ENCODE measurements at regions of chr12 and their contacts with region 1.

Region 1: DNA sequence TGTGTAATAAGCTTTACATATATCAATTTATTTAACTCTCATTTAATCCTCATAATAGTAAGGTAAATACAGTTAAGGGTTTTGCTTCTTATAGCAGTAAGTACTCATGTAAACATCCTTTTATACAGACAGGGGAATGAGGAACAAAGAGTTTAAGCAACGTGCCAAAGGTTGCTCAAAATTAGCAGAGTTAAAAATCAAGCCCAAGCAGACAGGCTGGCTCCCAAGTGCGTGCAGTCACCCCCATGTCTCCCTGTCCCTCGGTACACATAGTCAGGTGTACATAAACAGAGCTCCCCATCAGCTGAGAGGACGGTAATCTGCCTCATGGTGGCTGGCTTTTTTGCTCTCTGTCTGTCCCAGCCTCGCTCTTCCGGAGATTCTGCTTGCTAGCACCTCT is 126.4 kb downstream of the DERA start:
- DNase-seq: no peak
- H3K4me3 ChIP-seq: no peak overlapping the region
- H3K4me3 Mint-ChIP-seq: no peak overlapping the region
- H3K27ac Mint-ChIP-seq: no peak overlapping the region
- H3K4me1 ChIP-seq: 0 out of 2 replicates have a peak, but pooled peaks cover 3% of the 10 kb centered on the region
- H3K4me1 Mint-ChIP-seq: no peaks in the 10 kb centered on the region
- H3K27me3 ChIP-seq: no peaks in the 10 kb centered on the region
- H3K27me3 Mint-ChIP-seq: no peaks in the 10 kb centered on the region
- CTCF ChIP-seq: no peak

Region 2: GRCh38 chr12:15789220-15790171 is 248.0 kb before region 1 on chr12 and contains the start of gene EPS8:
- CTCF ChIA-PET with region 1: no interaction called
- POLR2A ChIA-PET with region 1: no interaction called
- intact Hi-C with region 1: no loop called
- DNase-seq: peak; percentile 91 to 97
- H3K4me3 ChIP-seq: peak within 1 kb of the TSS; percentile 76
- H3K4me3 Mint-ChIP-seq: peak within 1 kb of the TSS; percentile 75
- H3K27ac Mint-ChIP-seq: peak within 1 kb of the TSS; percentile 62
- H3K4me1 ChIP-seq: 0 out of 2 replicates have a peak, but pooled peaks cover 3% of the 10 kb centered on the region
- H3K4me1 Mint-ChIP-seq: peaks cover 5% of the 10 kb centered on the region
- H3K27me3 ChIP-seq: peaks cover 1% of the 10 kb centered on the region; the same call in 1 of the 2 replicates
- H3K27me3 Mint-ChIP-seq: peaks cover 13% of the 10 kb centered on the region
- CTCF ChIP-seq: no peak
- total RNA-seq, gene EPS8: 13.9 and 20.1 TPM in 2 replicates

Region 3: GRCh38 chr12:16076553-16076952 is 39.0 kb after region 1 on chr12:
- CTCF ChIA-PET with region 1: no interaction called
- POLR2A ChIA-PET with region 1: no interaction called
- intact Hi-C with region 1: loop called (anchors 5 kb)
- DNase-seq: peak in 1 of 2 experiments; percentile 38
- H3K4me3 ChIP-seq: no peak overlapping the region
- H3K4me3 Mint-ChIP-seq: no peak overlapping the region
- H3K27ac Mint-ChIP-seq: no peak overlapping the region
- H3K4me1 ChIP-seq: peaks cover 7% of the 10 kb centered on the region
- H3K4me1 Mint-ChIP-seq: no peaks in the 10 kb centered on the region
- H3K27me3 ChIP-seq: no peaks in the 10 kb centered on the region
- H3K27me3 Mint-ChIP-seq: peaks cover 6% of the 10 kb centered on the region
- CTCF ChIP-seq: peak; percentile 60 to 63